PC-9 (cell line): ENCODE measurements at regions of chr20 and their contacts with region 1.

Region 1: DNA sequence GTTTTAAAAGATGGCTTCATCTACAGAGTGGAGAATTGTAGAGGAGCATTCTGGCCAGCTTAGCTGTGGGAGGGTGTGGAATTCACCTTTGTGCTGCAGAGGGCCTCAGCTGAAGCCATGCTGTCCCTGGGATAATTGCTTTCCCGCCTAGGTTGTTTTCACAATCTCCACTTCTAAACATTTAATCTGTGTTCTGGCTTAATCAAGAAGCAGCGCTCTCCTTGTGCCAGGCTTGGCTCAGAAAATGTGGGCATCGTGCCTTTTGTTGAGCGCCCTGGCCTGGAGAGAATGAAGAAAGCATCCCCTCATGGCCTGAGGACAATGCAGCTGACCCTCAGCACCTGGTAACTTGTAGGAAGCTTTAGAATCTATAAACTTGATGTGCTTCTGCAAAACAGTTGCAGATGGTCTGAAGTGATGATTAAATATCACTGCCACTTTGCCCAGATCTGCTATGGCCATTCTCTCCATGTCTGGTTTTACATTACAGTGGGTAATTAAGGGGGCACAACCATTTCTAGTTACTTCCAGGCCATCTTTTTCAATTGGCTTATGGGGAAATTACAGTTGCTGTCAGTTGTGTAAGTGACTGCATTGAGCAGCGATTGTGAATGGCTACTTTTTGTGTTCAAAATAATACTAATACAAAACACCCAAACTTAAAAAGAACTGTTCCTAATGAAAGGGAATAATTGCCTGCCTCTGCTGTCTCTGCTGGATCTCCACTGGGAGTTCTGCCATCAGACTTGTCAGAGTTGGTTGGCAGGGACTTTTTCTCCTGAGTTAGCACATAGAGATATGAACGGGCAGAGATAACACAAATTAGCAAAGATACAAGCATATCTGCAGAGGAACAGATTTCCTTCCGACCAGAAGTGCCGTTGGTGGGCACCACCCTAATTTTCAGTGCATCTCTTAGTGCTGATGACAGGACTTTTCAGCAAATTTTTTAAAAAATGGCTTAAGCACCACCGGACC is 18.4 kb downstream of the CTNNBL1 start:
- DNase-seq: no peak
- H3K4me3 ChIP-seq: no peak overlapping the region
- H3K27ac ChIP-seq: peak overlapping the region; percentile 59
- H3K4me1 ChIP-seq: peaks cover 20% of the 10 kb centered on the region
- H3K27me3 ChIP-seq: no peaks in the 10 kb centered on the region
- CTCF ChIP-seq: no peak

Region 2: DNA sequence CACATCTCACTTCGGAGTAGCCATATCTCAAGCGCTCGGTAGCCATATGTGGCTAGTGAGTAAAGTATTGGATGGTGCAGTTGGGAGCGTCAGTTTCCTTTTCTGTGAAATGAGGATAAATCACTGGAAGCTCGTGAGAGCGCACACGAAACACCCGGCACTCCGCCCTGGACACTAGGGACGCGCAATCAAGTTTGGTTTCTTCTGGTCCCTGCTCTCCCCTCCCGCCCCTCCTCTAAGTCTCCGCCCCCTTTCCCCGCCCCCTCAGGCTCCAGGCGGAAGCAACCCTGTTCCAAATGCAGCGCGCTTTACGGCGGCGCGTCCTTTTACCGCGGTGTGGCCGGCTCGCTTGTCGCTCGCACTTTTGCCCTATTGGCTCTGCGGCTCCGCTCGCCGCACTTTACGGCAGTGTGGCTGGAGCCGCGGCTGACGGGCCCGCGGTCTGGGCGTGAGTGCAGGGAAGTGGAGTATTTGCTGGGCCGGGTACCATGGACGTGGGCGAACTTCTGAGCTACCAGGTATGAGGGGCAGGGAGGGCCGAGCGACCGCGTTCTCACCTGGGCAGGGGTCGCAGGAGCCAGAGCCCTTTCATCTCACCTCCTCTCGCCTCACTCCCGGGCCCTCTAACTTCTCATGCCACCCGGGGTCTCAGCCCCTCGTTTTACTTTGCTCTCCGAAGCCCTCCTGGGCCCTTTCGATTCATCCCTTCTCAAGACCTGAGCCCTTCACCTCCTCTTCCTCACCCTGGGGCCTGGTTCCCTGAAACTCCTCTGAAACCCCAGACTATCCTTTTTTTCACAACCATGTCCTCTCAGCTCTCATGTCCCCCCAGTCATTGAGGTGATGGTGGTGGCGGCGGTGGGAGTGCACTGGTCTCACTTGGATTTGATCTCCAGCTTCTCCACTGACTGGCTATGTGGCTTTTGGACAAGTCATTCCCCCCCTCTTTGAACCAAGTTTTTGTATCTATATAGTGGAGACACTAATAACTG is 18.3 kb before region 1 on chr20 and contains the start of gene CTNNBL1:
- CTCF ChIA-PET with region 1: no interaction called
- POLR2A ChIA-PET with region 1: no interaction called
- intact Hi-C with region 1: loop called (anchors 1 kb)
- DNase-seq: peak; percentile 90 to 98
- H3K4me3 ChIP-seq: peak within 1 kb of the TSS; percentile 64
- H3K27ac ChIP-seq: no peak within 1 kb of the TSS
- H3K4me1 ChIP-seq: peaks cover 11% of the 10 kb centered on the region; the same call in 1 of the 2 replicates
- H3K27me3 ChIP-seq: no peaks in the 10 kb centered on the region
- CTCF ChIP-seq: no peak
- total RNA-seq, gene CTNNBL1: 55.6 and 83.5 TPM in 2 replicates

Region 3: DNA sequence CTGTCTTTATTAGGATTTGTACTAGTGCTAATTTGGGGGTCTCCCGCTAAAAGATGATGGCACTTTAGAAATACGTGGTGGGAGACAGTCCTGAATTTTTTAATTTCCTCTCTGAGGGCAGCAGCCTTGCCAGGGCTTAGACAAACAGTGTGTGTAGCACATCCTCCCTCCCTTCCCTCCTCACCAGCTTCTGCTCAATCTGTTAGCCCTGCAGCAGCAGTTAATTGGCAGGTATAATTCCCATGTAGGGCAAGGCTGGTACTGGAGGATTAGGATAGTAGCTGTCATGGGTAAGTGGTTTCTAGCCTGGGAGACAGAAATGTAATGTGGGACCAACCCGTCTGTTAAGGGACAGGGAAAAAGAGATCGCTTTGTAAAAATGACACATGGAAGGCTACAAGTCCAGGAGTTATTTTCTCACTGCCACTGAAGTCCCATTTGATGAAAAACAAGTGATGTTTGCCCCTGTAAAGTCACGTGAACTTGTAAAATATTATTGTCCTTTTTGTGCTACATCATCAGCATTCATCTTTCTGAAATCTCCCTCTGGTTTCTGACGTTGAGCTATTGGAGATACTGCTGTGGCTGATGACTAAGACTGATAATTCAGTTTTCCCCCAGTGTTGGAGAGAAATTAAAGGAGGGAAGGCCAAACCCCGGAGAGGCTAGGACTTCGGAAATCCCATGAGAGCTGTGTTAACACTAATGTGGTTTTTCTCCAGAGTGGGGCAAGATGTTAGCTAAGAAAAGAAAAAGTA is 22.1 kb after region 1 on chr20:
- CTCF ChIA-PET with region 1: no interaction called
- POLR2A ChIA-PET with region 1: no interaction called
- intact Hi-C with region 1: no loop called
- DNase-seq: no peak
- H3K4me3 ChIP-seq: no peak overlapping the region
- H3K27ac ChIP-seq: no peak overlapping the region
- H3K4me1 ChIP-seq: no peaks in the 10 kb centered on the region
- H3K27me3 ChIP-seq: no peaks in the 10 kb centered on the region
- CTCF ChIP-seq: no peak